Aorta (tissue), 5 donors: ENCODE measurements at regions of chr1 and their contacts with region 1.

Region 1: GRCh38 chr1:210311726-210312493 is 16.8 kb upstream of the HHAT start:
- DNase-seq: no peak
- ATAC-seq: peak; percentile 53
- H3K4me3 ChIP-seq: no peak overlapping the region
- H3K27ac ChIP-seq: no peak overlapping the region
- H3K4me1 ChIP-seq: no peaks in the 10 kb centered on the region
- H3K27me3 ChIP-seq: no peaks in the 10 kb centered on the region

Region 2: GRCh38 chr1:210143465-210144062 is 168.3 kb before region 1 on chr1:
- intact Hi-C with region 1: loop called (anchors 1 kb)
- DNase-seq: peak; percentile 80 to 90
- ATAC-seq: no peak
- H3K4me3 ChIP-seq: no peak overlapping the region
- H3K27ac ChIP-seq: no peak overlapping the region
- H3K4me1 ChIP-seq: no peaks in the 10 kb centered on the region
- H3K27me3 ChIP-seq: no peaks in the 10 kb centered on the region

Region 3: DNA sequence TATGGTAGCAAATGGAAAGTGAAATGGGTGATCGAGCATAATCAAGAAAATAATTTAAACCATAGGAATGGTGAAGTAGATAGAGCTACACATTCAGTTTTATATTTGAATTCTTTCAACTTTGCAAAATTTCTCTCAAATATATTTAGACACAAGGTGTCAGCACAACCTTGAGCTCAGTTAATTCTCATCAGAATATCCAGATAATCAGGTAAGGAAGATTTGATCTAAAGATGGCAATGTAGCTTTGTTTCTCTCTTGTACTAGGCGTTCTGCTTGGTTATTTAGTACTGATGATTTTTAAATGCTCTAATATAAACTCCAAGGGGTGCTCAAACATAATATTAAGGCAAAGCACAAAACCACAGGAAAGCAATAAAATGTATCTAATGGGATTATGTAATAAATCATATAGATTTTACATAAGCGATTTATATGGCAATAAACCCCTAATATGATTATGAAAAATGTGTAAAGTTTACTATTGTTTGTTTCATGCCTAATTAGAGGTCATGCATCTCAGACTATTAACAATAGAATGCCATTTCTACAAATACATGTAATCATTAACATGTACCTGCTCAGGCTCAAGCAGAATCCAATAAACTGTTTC is 111.7 kb before region 1 on chr1:
- intact Hi-C with region 1: loop called (anchors 2 to 5 kb)
- DNase-seq: no peak
- ATAC-seq: no peak
- H3K4me3 ChIP-seq: no peak overlapping the region
- H3K27ac ChIP-seq: no peak overlapping the region
- H3K4me1 ChIP-seq: no peaks in the 10 kb centered on the region
- H3K27me3 ChIP-seq: no peaks in the 10 kb centered on the region

Region 4: DNA sequence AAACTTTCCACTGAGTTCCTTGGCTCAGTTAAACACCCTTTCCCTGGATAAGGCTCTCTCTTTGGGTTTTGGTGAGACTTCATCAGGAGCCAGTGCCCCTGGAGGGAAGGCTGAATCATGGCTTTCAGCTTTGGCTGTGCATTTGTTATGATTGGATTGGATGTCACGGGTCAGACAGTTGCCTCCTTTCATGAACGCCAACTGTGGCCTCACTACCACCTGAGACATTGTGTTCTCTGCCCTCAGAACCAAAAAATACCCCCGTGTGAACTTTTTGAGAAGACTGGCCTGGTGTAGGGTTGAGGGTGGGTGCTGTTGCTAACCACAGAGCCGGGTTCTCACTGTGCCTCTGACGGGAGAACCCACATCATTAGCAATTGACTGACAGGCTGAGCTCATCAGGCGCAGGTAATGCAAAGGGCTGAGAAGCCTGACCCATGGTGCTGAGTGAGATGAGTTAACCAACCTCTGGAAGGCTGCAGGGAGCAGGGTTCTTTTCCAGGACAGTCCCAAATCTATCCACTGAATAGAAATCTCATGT is 82.4 kb after region 1 on chr1:
- intact Hi-C with region 1: no loop called
- DNase-seq: peak in 1 of 2 donors; percentile 55
- ATAC-seq: peak; percentile 76
- H3K4me3 ChIP-seq: no peak overlapping the region
- H3K27ac ChIP-seq: peak overlapping the region in 1 of 2 donors; percentile 11
- H3K4me1 ChIP-seq: peaks cover 0 to 3% of the 10 kb centered on the region in 2 donors
- H3K27me3 ChIP-seq: no peaks in the 10 kb centered on the region